Activated naive CD4-positive, alpha-beta T cell treated with anti-CD3 and anti-CD28 coated beads, Interleukin-2, amount 10 ng/mL, durations not matched to agents 7 days and 5 days (primary cell): ENCODE measurements at regions of chr17 and their contacts with region 1.

Region 1: GRCh38 chr17:76278952-76279741 is 14.0 kb downstream of the UBALD2 start:
- DNase-seq: peak; percentile 90
- H3K4me3 Mint-ChIP-seq: no peak overlapping the region
- H3K27ac Mint-ChIP-seq: peak overlapping the region; percentile 52
- H3K4me1 Mint-ChIP-seq: peaks cover 16% of the 10 kb centered on the region
- H3K27me3 Mint-ChIP-seq: peaks cover 4% of the 10 kb centered on the region

Region 2: GRCh38 chr17:76103274-76104139 is 175.6 kb before region 1 on chr17 and contains the start of gene EXOC7:
- CTCF ChIA-PET with region 1: interaction called, 29 read pairs
- DNase-seq: peak; percentile 93
- H3K4me3 Mint-ChIP-seq: peak within 1 kb of the TSS; percentile 97
- H3K27ac Mint-ChIP-seq: peak within 1 kb of the TSS; percentile 93
- H3K4me1 Mint-ChIP-seq: peaks cover 30% of the 10 kb centered on the region
- H3K27me3 Mint-ChIP-seq: no peaks in the 10 kb centered on the region

Region 3: DNA sequence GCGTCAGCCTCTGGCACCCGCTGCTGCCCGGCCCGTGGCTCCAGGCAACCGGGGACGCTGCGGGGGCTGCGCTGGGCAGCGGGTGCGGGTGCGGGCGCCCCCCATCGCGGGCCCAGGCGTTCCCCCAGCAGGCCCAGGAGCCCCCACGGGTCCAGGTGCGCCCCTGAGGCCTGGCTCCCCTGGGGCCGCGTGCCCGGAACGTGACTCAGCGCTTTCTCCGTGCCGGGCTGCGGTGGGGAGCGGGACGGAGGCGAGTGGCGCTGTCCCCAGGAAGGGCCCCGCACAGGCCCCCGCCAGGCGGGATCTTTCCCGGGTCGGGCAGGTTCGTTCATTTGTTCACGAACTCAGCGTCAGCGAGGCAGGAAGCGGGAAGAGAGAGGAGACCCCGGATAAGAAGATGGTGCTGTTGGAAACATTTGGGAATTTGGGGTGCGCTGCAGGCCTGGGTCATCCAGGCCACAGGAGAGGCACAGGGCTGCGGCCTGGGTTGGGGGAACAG is 157.2 kb before region 1 on chr17:
- CTCF ChIA-PET with region 1: interaction called, 215 read pairs
- DNase-seq: no peak
- H3K4me3 Mint-ChIP-seq: no peak overlapping the region
- H3K27ac Mint-ChIP-seq: peak overlapping the region; percentile 75
- H3K4me1 Mint-ChIP-seq: peaks cover 43% of the 10 kb centered on the region
- H3K27me3 Mint-ChIP-seq: peaks cover 5% of the 10 kb centered on the region

Region 4: GRCh38 chr17:76141212-76142038 is 137.7 kb before region 1 on chr17 and contains the start of gene FOXJ1:
- CTCF ChIA-PET with region 1: interaction called, 15 read pairs
- DNase-seq: peak; percentile 94
- H3K4me3 Mint-ChIP-seq: peak within 1 kb of the TSS; percentile 73
- H3K27ac Mint-ChIP-seq: peak within 1 kb of the TSS; percentile 96
- H3K4me1 Mint-ChIP-seq: peaks cover 66% of the 10 kb centered on the region
- H3K27me3 Mint-ChIP-seq: peaks cover 45% of the 10 kb centered on the region

Region 5: GRCh38 chr17:76191896-76192295 is 87.3 kb before region 1 on chr17:
- CTCF ChIA-PET with region 1: interaction called, 10 read pairs
- DNase-seq: peak; percentile 71
- H3K4me3 Mint-ChIP-seq: peak overlapping the region; percentile 55
- H3K27ac Mint-ChIP-seq: peak overlapping the region; percentile 96
- H3K4me1 Mint-ChIP-seq: peaks cover 92% of the 10 kb centered on the region
- H3K27me3 Mint-ChIP-seq: no peaks in the 10 kb centered on the region